ENCODE measurements at regions of chr10 and their contacts with region 1.

Region 1: GRCh38 chr10:112471878-112472487 is 25.0 kb downstream of the VTI1A start:
- DNase-seq: no peak
- H3K4me3 Mint-ChIP-seq: no peak overlapping the region
- H3K27ac Mint-ChIP-seq: no peak overlapping the region
- H3K4me1 Mint-ChIP-seq: no peaks in the 10 kb centered on the region
- H3K27me3 Mint-ChIP-seq: no peaks in the 10 kb centered on the region

Region 2: DNA sequence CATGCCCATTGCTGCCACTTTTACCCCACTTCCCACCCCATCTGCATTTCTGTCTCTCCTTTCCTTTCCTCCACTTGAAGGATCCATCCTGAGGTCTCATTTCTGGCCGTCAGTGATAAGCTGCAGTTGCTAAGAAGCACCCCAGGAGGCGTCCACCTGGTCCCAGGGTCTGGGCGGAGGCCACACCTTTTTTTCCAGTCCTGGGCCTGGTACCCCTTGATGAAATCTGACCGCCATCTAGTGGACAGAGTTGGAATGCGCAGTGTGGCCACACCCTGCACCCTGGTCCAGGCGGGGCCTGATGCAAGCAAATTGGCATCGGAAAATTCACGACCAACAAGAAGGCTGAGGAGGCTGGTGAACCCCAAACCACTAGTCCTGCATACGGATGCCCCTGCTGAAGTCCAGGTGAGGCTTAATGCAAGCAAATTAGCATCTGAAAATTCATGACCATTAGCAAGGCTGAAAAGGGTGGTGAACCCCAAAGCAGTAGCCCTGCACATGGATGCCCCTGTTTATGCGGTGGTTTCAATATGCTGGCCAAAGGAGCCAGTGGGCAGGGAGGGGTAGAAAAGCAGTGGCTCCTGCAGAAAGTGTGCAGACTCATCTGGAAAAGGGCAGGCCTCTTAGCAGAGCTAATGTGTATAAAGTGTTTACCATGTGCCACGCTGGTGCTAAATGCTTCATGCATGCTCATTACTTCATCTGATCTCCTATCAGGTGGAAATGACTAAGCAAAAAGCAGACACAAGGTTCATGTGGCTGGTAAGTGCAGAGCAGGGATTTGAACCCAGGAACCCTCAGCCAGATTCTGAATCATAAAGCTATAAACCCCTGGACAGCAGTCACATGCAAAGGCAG is 331.6 kb before region 1 on chr10:
- CTCF ChIA-PET with region 1: interaction called, 11 read pairs
- DNase-seq: peak; percentile 85
- H3K4me3 Mint-ChIP-seq: no peak overlapping the region
- H3K27ac Mint-ChIP-seq: no peak overlapping the region
- H3K4me1 Mint-ChIP-seq: no peaks in the 10 kb centered on the region
- H3K27me3 Mint-ChIP-seq: peaks cover 29% of the 10 kb centered on the region

Region 3: DNA sequence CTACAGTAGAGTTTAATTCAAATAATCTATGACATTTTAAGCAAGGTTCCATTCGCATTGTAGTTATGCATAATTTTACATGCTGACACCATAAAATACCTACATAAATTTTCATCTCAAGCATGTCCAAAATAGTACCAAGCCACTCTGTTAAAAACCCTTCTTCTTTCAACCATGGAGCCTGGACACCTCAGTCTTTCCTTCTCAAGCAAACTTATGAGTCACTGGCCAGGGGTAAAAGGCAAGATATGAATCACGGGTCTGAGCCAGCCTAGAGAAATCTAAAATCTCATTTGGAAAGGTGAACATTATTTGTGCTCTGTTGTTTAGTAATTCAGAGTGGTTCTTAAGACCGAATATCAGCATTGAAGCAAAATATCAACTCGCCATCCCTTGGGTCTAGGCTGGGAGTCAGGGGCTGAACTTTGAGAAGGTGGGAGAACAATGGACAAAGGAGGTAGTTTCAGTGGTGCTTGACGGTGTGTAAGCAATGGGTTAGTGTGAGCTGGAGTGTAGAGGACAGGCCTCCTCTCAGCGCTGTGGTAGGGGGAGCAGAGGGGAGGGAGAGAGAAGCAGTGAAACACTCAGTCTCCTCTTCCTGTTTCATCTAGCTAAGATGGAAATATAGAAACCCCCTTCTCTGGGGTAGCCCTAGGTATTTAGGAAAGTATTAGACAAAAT is 269.3 kb before region 1 on chr10:
- CTCF ChIA-PET with region 1: no interaction called
- DNase-seq: no peak
- H3K4me3 Mint-ChIP-seq: no peak overlapping the region
- H3K27ac Mint-ChIP-seq: no peak overlapping the region
- H3K4me1 Mint-ChIP-seq: no peaks in the 10 kb centered on the region
- H3K27me3 Mint-ChIP-seq: peaks cover 18% of the 10 kb centered on the region

Region 4: GRCh38 chr10:112307358-112308124 is 164.4 kb before region 1 on chr10:
- CTCF ChIA-PET with region 1: interaction called, 11 read pairs
- DNase-seq: peak; percentile 55
- H3K4me3 Mint-ChIP-seq: no peak overlapping the region
- H3K27ac Mint-ChIP-seq: no peak overlapping the region
- H3K4me1 Mint-ChIP-seq: no peaks in the 10 kb centered on the region
- H3K27me3 Mint-ChIP-seq: peaks cover 26% of the 10 kb centered on the region

Region 5: DNA sequence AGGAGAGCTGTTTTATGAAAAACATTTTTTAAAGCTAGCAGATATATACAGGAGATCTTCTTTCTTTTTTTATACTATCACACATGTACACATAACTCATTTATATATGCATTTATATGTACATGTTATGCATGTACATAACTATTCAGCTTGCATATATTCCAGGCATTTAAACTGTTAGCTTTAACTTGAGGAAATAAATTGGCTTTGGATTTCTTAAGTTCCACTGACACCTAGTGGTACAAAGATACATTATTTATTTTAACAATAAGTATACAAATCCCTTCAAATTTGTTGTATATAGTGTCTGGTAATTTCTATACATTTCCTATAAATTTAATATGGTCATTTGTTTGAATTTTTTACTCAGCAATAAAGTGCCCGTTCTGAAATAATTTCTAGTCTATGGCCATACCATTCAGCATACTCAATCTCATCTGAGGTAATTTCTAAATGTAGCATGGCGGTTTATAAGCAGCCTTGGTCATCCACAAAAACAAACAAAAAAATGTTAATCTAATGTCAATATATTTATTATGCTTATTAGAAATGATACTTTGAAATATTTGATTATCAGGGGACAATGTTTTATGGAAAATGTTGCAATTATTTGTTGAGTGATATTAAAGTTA is 36.9 kb before region 1 on chr10:
- CTCF ChIA-PET with region 1: interaction called, 13 read pairs
- DNase-seq: no peak
- H3K4me3 Mint-ChIP-seq: no peak overlapping the region
- H3K27ac Mint-ChIP-seq: no peak overlapping the region
- H3K4me1 Mint-ChIP-seq: no peaks in the 10 kb centered on the region
- H3K27me3 Mint-ChIP-seq: no peaks in the 10 kb centered on the region

Region 6: DNA sequence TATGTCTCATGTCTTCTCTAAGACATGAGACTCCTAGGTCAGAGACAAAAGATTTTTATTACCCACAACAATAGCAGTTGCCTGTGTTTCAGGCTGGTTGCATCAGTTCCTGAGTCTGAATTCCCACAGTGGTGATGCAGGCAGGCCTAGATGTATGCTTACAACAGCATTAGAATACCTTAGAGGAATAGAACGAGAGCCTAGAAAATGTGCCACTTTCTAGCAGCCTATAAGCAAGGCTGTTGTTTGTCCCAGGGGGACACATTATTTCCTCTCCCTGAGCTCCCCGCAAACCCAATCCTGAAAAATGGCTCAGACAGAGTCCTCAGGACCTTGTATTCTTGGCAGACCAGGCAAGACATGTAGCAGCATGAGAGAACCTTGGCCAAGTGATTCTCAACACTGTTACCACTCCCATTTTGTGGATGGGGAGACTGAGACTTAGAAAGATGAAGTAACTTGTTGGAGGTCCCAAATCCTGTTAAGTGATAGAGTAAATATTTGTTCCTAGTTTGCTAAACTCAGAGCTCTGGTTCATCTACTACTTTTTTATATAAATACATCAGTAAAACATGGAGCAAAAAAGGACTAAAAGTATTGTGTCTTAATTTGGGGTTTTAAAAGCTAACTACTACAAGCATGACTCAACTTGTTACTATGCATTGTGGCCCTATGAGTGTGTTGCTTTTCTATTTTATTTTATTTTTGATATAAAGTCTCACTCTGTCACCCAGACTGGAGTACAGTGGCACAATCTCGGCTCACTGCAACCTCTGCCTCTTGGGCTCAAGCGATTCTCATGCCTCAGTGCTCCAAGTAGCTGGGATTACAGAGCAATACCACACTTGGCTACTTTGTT is 10.7 kb before region 1 on chr10:
- CTCF ChIA-PET with region 1: interaction called, 18 read pairs
- DNase-seq: no peak
- H3K4me3 Mint-ChIP-seq: no peak overlapping the region
- H3K27ac Mint-ChIP-seq: peak overlapping the region; percentile 3
- H3K4me1 Mint-ChIP-seq: no peaks in the 10 kb centered on the region
- H3K27me3 Mint-ChIP-seq: no peaks in the 10 kb centered on the region

Region 7: GRCh38 chr10:113385021-113385999 is 913.3 kb after region 1 on chr10:
- CTCF ChIA-PET with region 1: interaction called, 11 read pairs
- DNase-seq: peak; percentile 64
- H3K4me3 Mint-ChIP-seq: no peak overlapping the region
- H3K27ac Mint-ChIP-seq: no peak overlapping the region
- H3K4me1 Mint-ChIP-seq: peaks cover 20% of the 10 kb centered on the region
- H3K27me3 Mint-ChIP-seq: peaks cover 36% of the 10 kb centered on the region

Measured in activated naive CD4-positive, alpha-beta T cell treated with anti-CD3 and anti-CD28 coated beads, Interleukin-2, amount 10 ng/mL, durations not matched to agents 7 days and 5 days (primary cell).